Gastrocnemius medialis (tissue), 4 donors: ENCODE measurements at regions of chr12 and their contacts with region 1.

Region 1: GRCh38 chr12:119704065-119704747 is 36.3 kb downstream of the PRKAB1 start:
- DNase-seq: peak; percentile 27 to 44
- ATAC-seq: peak; percentile 83 to 92
- H3K4me3 ChIP-seq: no peak overlapping the region
- H3K27ac ChIP-seq: peak overlapping the region; percentile 57 to 75 (median 64)
- H3K4me1 ChIP-seq: peaks cover 14 to 16% of the 10 kb centered on the region in 2 donors
- H3K27me3 ChIP-seq: no peaks in the 10 kb centered on the region
- CTCF ChIP-seq: no peak
- POLR2A ChIP-seq: no peak

Region 2: GRCh38 chr12:119780786-119781434 is 76.7 kb after region 1 on chr12:
- in situ Hi-C with region 1: no loop called
- intact Hi-C with region 1: loop called (anchors 2 kb)
- DNase-seq: no peak
- ATAC-seq: peak in 1 of 2 donors; percentile 39
- H3K4me3 ChIP-seq: no peak overlapping the region
- H3K27ac ChIP-seq: no peak overlapping the region
- H3K4me1 ChIP-seq: peaks cover 0 to 2% of the 10 kb centered on the region in 2 donors
- H3K27me3 ChIP-seq: no peaks in the 10 kb centered on the region
- CTCF ChIP-seq: peak; percentile 56 to 77 (median 70)
- POLR2A ChIP-seq: no peak